ENCODE measurements at regions of chr9 and their contacts with region 1.

Region 1: DNA sequence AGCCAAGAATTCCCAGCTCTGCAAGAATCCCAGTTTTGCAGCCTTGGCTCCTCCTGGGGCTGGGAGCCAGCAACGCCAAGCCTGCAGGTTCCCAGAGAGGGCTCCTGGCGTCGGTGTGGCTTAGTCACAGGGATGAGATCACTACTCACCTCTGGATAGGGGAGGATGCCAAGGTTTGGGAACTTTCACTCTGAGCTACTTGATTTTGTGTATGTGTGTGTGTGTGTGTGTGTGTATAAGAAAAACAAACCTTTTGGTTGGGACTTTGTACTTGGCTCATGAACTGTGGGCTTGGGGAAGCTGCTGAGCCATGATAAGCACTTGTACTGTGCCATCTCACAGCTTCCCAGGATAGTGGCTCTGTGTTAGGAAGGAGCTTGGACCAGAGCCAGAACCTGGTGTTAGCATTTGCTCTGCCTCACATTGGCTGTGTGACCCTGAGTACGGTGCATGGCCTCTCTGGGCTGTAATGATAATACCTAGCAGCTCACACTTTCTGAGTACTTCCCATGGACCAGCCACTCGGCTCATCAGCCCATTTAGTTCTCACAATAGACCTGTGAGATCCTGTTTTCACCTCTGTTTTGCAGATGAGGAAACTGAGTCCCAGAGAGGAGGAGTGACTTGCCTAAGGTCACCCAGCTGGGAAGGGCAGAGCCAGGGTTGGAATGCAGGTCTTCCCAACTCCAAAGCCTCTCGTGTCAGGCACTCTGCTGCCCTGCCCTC is 41.4 kb upstream of the DAB2IP start:
- DNase-seq: no peak
- H3K4me3 ChIP-seq: no peak overlapping the region
- H3K27ac ChIP-seq: peak overlapping the region; percentile 3 to 34; a peak in 2 of 4 replicates
- H3K4me1 ChIP-seq: peaks cover 28 to 39% of the 10 kb centered on the region in 2 experiments; a peak in 3 of 4 replicates
- H3K27me3 ChIP-seq: no peaks in the 10 kb centered on the region
- CTCF ChIP-seq: no peak
- EP300 ChIP-seq: peak in 1 of 2 experiments; percentile 20; a peak in 1 of 4 replicates
- RAD21 ChIP-seq: no peak

Region 2: GRCh38 chr9:121529237-121529987 is 80.6 kb before region 1 on chr9:
- CTCF ChIA-PET with region 1: no interaction called
- POLR2A ChIA-PET with region 1: no interaction called
- DNase-seq: peak; percentile 83
- H3K4me3 ChIP-seq: no peak overlapping the region
- H3K27ac ChIP-seq: peak overlapping the region; percentile 78 to 84
- H3K4me1 ChIP-seq: peaks cover 0 to 13% of the 10 kb centered on the region in 2 experiments; a peak in 1 of 4 replicates
- H3K27me3 ChIP-seq: no peaks in the 10 kb centered on the region
- CTCF ChIP-seq: no peak
- EP300 ChIP-seq: peak; percentile 24 to 65; a peak in 2 of 4 replicates
- RAD21 ChIP-seq: no peak

Region 3: GRCh38 chr9:121621113-121621449 is 11.1 kb after region 1 on chr9:
- CTCF ChIA-PET with region 1: interaction called, 12 read pairs
- POLR2A ChIA-PET with region 1: no interaction called
- DNase-seq: peak; percentile 79
- H3K4me3 ChIP-seq: no peak overlapping the region; a peak in 1 of 4 replicates
- H3K27ac ChIP-seq: no peak overlapping the region
- H3K4me1 ChIP-seq: peaks cover 0 to 20% of the 10 kb centered on the region in 2 experiments; a peak in 1 of 4 replicates
- H3K27me3 ChIP-seq: no peaks in the 10 kb centered on the region
- CTCF ChIP-seq: peak; percentile 64
- EP300 ChIP-seq: no peak
- RAD21 ChIP-seq: peak; percentile 69